Left ventricle myocardium inferior (tissue), 1 donor: ENCODE measurements at regions of chr3 and their contacts with region 1.

Region 1: DNA sequence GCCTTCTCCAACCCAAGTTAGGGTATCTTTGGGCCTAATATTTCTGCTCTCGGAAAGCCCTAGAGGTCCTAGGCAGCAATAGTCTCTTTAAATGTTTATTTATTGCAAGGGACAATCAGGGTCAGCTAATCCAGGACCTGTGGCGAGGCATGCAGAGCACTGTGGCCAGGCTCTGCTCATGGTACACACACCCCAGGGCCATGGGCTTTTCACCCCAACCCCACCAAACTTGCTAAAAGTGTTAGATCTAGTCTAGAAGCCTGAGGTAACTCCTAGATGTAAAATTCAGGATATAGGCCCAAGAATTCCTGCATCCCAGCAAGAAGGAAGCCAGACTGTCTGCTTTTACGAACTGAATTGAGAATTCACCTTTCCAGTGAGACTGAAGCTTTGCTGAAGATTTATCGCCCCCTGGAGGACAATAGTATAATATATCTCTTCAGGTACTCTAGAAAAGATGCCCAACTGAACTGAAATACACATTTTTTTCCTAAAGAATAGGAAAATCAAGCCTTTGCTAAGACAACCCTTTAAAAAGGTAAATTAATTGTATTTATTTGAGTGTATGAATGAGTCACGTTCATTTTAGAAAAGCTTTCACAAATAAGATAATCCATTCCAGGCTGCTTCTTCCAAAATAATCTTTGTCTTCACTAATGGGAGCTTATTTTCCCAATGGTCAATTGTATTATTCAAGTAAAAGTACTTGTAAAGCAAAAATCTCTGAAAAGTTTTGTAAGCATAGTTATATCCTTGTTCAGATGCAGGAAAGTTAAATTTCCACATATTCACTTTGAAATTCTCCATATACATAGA is 89.8 kb downstream of the LRRC3B start:
- DNase-seq: no peak
- H3K4me3 ChIP-seq: no peak overlapping the region
- H3K27ac ChIP-seq: no peak overlapping the region
- H3K4me1 ChIP-seq: no peaks in the 10 kb centered on the region
- H3K27me3 ChIP-seq: no peaks in the 10 kb centered on the region
- CTCF ChIP-seq: peak; percentile 80

Region 2: GRCh38 chr3:25648107-25648535 is 1064.3 kb before region 1 on chr3:
- intact Hi-C with region 1: loop called (anchors 5 kb)
- DNase-seq: no peak
- H3K4me3 ChIP-seq: no peak overlapping the region
- H3K27ac ChIP-seq: no peak overlapping the region
- H3K4me1 ChIP-seq: peaks cover 42% of the 10 kb centered on the region
- H3K27me3 ChIP-seq: no peaks in the 10 kb centered on the region
- CTCF ChIP-seq: peak; percentile 92

Region 3: DNA sequence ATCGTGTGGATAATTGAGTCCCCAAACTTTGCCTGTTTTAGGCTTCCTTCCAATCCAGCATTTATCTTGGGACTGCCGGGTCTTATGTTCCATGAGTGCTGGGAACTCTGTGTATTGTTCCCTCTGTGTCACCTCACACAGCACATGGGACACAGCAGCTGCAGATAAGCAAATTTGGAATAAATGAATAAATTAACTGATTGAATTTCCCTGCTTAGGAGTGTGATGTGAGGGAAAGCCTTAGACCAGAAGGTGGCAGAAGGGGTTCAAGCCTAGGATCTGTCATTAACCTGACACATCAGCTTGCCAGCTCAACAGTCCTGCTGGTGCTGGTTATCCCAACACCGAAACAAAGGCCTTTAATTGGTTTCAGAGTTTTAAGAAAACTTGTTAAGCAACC is 808.2 kb before region 1 on chr3:
- intact Hi-C with region 1: loop called (anchors 10 kb)
- DNase-seq: no peak
- H3K4me3 ChIP-seq: no peak overlapping the region
- H3K27ac ChIP-seq: no peak overlapping the region
- H3K4me1 ChIP-seq: no peaks in the 10 kb centered on the region
- H3K27me3 ChIP-seq: no peaks in the 10 kb centered on the region
- CTCF ChIP-seq: peak; percentile 70